Adrenal gland (tissue), 19 donors: ENCODE measurements at regions of chr15 and their contacts with region 1.

Region 1: GRCh38 chr15:89358755-89359439 is 24.3 kb upstream of the POLG start:
- DNase-seq: peak; percentile 49 to 87 (median 67)
- H3K4me3 ChIP-seq: peak overlapping the region in 2 of 4 donors; percentile 26 to 47
- H3K27ac ChIP-seq: no peak overlapping the region
- H3K4me1 ChIP-seq: peaks cover 4 to 17% of the 10 kb centered on the region in 2 donors
- H3K27me3 ChIP-seq: peaks cover 65% of the 10 kb centered on the region
- CTCF ChIP-seq: peak; percentile 94 to 100 (median 98)
- POLR2A ChIP-seq: no peak

Region 2: DNA sequence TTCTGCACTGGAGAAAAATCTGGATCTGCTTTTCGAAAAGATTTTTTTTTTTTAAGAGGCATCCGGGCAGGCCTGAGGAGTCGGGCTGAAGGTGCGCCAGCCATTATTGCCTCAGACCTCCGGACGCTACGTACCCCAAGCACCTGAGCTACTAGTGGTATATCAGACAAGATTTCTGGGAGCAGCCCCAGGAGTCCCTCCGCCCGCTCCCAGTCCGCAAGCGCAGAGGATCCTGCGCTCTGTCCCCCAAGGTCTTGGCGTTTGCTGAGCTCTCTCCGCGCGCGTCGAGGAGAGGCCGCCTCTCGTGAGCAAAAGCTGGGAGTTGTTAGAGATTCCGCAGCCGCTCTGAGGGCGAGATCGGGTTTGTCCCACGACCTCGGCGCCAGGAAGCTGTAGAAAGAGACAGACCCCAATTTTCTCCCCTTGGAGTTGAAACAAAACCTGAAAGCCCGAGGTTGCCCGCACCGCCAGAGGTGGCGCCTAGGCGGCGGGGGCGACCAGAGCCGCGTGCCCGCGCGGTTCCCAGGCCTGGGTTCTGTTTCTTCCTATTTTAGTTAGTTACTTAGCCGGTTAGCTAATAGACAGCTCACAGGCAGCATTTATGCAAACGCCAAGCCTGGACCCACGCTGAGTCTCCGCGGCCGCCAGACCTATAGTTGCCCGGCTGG is 48.2 kb after region 1 on chr15:
- intact Hi-C with region 1: no loop called
- DNase-seq: no peak
- H3K4me3 ChIP-seq: no peak overlapping the region
- H3K27ac ChIP-seq: no peak overlapping the region
- H3K4me1 ChIP-seq: peaks cover 0 to 6% of the 10 kb centered on the region in 2 donors
- H3K27me3 ChIP-seq: peaks cover 95% of the 10 kb centered on the region
- CTCF ChIP-seq: no peak
- POLR2A ChIP-seq: no peak

Region 3: DNA sequence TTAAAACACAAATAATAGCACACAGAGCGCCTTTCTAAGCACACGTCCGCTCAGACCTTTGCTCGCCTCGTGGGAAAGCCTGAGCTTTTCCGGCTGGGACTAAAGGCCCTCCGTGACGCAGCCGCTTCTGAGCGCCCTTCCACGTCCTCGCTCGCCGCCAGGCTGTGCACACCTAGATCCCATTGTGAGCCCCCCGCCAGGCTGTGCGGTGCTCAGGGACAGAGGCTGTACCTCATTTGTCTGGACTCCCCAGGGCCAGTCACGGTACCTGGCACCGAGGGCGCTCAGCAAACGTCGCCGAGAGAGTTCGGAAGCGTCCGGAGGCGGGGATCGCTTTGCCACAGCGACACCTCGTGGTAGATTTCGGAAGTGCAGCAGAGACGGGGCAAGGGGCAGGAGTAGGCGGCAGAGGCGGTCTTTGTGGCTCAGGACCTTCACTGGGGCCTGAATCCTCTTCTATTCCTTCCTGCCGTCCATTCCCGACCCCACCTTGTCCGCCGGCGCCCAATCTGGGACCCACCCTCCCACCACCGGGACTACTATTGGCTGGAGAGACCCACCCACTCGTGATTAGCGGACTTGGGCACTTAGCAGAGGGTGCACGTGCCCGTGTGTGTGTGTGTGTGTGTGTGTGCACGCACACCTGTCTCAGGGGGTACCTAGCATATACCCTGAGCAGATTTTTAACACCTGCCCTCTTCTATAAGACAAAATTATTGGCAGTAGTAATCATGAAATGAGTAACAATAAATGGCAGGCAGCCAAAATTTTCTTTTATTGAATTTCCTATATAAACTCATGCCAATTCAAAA is 71.8 kb after region 1 on chr15:
- intact Hi-C with region 1: loop called (anchors 1 to 5 kb)
- DNase-seq: peak; percentile 77 to 92 (median 83)
- H3K4me3 ChIP-seq: peak overlapping the region in 1 of 4 donors; percentile 41
- H3K27ac ChIP-seq: no peak overlapping the region
- H3K4me1 ChIP-seq: peaks cover 0 to 8% of the 10 kb centered on the region in 2 donors
- H3K27me3 ChIP-seq: peaks cover 7% of the 10 kb centered on the region
- CTCF ChIP-seq: peak; percentile 95 to 98 (median 96)
- POLR2A ChIP-seq: no peak

Region 4: DNA sequence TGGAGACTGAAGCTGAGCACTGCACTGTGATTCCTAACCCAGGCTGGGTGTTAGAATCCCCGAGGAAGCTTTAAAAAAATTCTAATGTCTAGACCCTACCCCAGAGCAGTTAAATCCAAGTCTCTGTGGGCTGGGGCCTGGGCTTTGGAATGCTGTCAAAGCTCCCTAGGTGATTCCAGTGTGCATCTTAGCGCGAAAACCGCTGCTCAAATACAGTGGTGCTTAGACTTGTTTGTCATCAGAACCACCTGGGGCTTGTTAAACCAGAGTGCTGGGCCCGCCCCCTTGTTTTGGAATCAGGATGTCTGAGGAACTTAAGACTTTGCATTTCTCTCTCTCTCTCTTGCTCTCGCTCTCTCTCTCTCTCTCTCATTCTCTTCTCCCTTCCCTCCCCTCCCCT is 116.8 kb after region 1 on chr15:
- intact Hi-C with region 1: loop called in 1 of 2 experiments (anchors 2 kb)
- DNase-seq: no peak
- H3K4me3 ChIP-seq: no peak overlapping the region
- H3K27ac ChIP-seq: no peak overlapping the region
- H3K4me1 ChIP-seq: no peaks in the 10 kb centered on the region
- H3K27me3 ChIP-seq: peaks cover 20% of the 10 kb centered on the region
- CTCF ChIP-seq: no peak
- POLR2A ChIP-seq: no peak